WTC11 (cell line): ENCODE measurements at regions of chr10 and their contacts with region 1.

Region 1: DNA sequence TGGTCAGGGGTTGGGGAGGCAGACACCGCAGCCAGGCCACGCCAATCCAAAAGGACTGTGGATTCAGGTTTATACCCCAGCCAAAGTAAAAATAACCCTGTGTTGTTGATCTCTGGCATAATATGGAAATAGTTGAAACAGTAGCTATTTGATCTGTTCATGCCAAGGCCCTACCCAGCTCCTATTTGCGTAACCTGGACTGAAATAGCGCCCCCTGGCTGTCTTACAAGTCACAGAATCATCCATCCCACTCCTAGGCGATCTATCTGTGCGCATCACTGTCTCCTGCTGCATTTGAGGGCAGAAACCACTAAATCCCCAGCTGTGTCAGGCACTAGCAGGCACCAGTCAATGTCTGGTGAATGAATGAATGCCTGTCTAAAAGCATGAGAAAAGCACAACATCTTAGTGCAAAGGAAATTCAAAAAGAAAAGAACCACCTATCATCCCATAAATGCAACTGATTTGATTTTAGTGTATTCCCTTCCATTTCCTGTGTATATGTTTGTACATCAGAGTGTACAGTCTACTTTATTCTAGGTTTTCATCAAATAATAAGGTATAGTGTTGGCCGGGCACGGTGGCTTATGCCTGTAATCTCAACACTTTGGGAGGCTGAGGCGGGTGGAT is 160.0 kb downstream of the SLIT1 start:
- DNase-seq: peak; percentile 69
- ATAC-seq: peak; percentile 92
- H3K4me3 Mint-ChIP-seq: no peak overlapping the region
- H3K27ac Mint-ChIP-seq: no peak overlapping the region
- H3K4me1 Mint-ChIP-seq: peaks cover 8% of the 10 kb centered on the region
- H3K27me3 Mint-ChIP-seq: no peaks in the 10 kb centered on the region
- CTCF ChIP-seq: peak; percentile 88

Region 2: GRCh38 chr10:96532496-96532895 is 493.2 kb before region 1 on chr10:
- CTCF ChIA-PET with region 1: no interaction called
- POLR2A ChIA-PET with region 1: no interaction called
- DNase-seq: no peak
- ATAC-seq: no peak
- H3K4me3 Mint-ChIP-seq: no peak overlapping the region
- H3K27ac Mint-ChIP-seq: no peak overlapping the region
- H3K4me1 Mint-ChIP-seq: peaks cover 5% of the 10 kb centered on the region; the same call in 1 of the 2 replicates
- H3K27me3 Mint-ChIP-seq: no peaks in the 10 kb centered on the region
- CTCF ChIP-seq: no peak

Region 3: DNA sequence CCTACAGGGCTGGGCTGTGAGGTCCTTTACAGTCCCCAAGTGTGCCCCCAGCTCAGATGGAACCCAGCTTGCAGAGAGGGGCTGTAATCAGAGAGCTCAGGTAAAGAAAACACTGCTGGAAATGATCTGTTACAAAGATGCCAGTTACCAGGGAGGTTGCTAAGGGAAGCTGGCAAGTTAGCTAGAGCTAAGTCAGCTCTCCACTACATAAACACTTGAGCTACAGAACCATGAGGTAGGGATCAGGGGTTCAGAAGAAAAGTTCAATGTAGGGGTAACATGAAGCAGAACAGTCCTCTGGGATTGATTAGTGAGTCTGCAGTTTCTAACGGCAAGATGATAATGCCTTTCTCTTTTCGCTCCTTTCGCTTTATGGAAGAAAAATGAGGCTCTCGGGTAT is 385.8 kb before region 1 on chr10:
- CTCF ChIA-PET with region 1: interaction called, 18 read pairs
- POLR2A ChIA-PET with region 1: no interaction called
- DNase-seq: no peak
- ATAC-seq: no peak
- H3K4me3 Mint-ChIP-seq: no peak overlapping the region
- H3K27ac Mint-ChIP-seq: no peak overlapping the region
- H3K4me1 Mint-ChIP-seq: no peaks in the 10 kb centered on the region
- H3K27me3 Mint-ChIP-seq: no peaks in the 10 kb centered on the region
- CTCF ChIP-seq: no peak

Region 4: DNA sequence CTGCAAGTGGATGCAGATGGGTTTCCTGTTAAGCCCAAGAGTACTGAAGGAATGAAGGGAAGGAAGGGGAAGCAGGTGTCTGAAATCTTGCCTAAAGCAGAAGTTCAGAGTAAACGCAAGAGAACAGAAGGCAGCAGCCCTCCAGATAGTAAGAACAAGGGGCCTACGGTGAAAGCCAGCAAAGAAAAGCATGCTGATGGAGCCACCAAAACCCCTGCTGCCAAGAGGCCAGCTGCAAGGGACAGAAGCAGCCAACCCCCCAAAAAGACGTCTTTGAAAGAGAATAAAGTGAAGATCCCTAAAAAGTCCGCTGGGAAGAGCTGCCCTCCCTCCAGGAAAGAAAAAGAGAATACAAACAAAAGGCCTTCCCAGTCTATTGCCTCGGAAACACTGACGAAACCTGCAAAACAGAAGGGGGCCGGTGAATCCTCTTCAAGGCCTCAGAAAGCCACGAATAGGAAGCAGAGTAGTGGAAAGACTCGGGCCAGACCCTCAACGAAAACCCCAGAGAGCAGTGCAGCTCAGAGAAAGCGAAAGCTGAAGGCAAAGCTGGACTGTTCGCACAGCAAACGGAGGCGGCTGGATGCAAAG is 41.1 kb before region 1 on chr10:
- CTCF ChIA-PET with region 1: interaction called, 18 read pairs
- POLR2A ChIA-PET with region 1: no interaction called
- DNase-seq: no peak
- ATAC-seq: peak; percentile 85
- H3K4me3 Mint-ChIP-seq: no peak overlapping the region
- H3K27ac Mint-ChIP-seq: peak overlapping the region; percentile 91
- H3K4me1 Mint-ChIP-seq: peaks cover 24% of the 10 kb centered on the region
- H3K27me3 Mint-ChIP-seq: no peaks in the 10 kb centered on the region
- CTCF ChIP-seq: no peak

Region 5: GRCh38 chr10:96998329-96998888 is 27.3 kb before region 1 on chr10:
- CTCF ChIA-PET with region 1: interaction called, 27 read pairs
- POLR2A ChIA-PET with region 1: no interaction called
- DNase-seq: no peak
- ATAC-seq: no peak
- H3K4me3 Mint-ChIP-seq: no peak overlapping the region
- H3K27ac Mint-ChIP-seq: no peak overlapping the region
- H3K4me1 Mint-ChIP-seq: no peaks in the 10 kb centered on the region
- H3K27me3 Mint-ChIP-seq: no peaks in the 10 kb centered on the region
- CTCF ChIP-seq: no peak

Region 6: GRCh38 chr10:97037365-97038361 is 11.9 kb after region 1 on chr10:
- CTCF ChIA-PET with region 1: interaction called, 98 read pairs
- POLR2A ChIA-PET with region 1: no interaction called
- DNase-seq: peak; percentile 95
- ATAC-seq: peak; percentile 94
- H3K4me3 Mint-ChIP-seq: peak overlapping the region; percentile 45
- H3K27ac Mint-ChIP-seq: no peak overlapping the region
- H3K4me1 Mint-ChIP-seq: peaks cover 28% of the 10 kb centered on the region
- H3K27me3 Mint-ChIP-seq: peaks cover 5% of the 10 kb centered on the region
- CTCF ChIP-seq: peak; percentile 92

Region 7: DNA sequence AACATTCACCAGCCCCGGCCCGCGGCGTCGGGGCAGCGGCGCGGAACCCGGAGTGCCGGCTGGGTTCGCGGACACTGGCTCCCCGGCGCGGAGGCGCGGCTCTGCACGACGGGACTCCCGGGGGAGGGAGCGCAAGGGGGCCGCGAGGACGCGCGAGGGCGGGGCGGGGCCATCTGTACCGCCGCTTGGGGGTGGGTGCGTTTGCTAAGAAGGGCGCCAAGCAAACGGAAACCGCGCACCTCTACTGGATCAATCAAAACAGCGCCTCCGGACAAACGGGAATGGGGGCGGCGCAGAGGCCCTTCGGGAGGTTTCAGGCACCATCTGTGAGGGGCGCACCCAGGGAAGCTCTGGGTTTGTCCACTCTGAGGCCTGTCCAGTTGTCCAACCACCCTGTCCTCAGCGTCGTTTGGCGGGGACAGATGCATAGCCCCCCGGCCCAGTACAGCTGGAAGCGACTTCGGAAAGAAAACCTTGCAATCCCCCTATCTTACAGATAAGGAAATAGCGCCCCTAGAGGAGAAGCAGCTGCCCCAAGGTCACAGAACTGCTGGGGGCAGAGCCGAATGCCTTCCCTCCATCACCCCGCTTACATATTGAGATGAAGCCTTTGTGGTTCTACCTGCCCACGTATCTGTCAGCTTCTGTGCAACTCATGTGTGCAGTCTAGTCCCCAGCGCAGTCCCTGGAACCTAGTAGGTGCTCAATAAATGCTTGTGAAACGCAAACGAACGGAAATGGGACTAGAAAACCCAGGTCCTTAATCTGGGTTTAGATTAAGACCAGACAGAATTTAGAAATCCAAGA is 170.7 kb after region 1 on chr10:
- CTCF ChIA-PET with region 1: interaction called, 14 read pairs
- POLR2A ChIA-PET with region 1: no interaction called
- DNase-seq: peak; percentile 78
- ATAC-seq: peak; percentile 91
- H3K4me3 Mint-ChIP-seq: peak overlapping the region; percentile 77
- H3K27ac Mint-ChIP-seq: no peak overlapping the region
- H3K4me1 Mint-ChIP-seq: peaks cover 13% of the 10 kb centered on the region
- H3K27me3 Mint-ChIP-seq: peaks cover 15% of the 10 kb centered on the region
- CTCF ChIP-seq: peak; percentile 76

Region 8: DNA sequence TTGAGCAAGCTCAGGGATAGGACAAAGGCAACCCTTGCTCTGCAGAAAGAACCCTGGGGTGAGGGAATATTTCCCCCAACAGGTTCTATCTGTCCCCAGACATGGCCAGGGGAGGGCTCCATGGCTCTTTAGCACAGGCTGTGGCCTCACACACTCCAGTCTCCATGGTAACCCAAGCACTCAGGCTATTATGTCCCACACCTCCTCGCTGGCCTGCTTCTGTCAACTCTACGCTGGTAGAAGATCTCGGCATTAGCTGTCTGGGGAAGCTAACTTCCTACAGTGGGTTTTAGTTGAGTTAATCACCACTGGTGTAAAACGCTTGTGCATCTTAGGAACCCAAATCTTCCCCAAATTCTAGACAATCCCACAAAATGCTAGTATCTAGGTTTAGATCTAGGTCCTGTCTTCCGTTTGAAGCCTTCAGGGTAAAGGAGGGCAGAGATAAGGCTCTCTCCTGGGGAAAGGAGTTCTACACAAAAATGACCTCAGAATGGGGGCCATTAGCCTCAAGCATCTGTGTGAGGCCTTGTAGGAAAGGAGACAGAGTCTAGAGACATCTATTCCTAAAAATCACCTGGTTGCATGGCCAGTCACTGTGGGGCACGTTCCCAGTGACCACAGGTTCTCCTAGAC is 196.7 kb after region 1 on chr10:
- CTCF ChIA-PET with region 1: interaction called, 10 read pairs
- POLR2A ChIA-PET with region 1: no interaction called
- DNase-seq: peak; percentile 54
- ATAC-seq: peak; percentile 99
- H3K4me3 Mint-ChIP-seq: no peak overlapping the region
- H3K27ac Mint-ChIP-seq: no peak overlapping the region
- H3K4me1 Mint-ChIP-seq: peaks cover 9% of the 10 kb centered on the region
- H3K27me3 Mint-ChIP-seq: no peaks in the 10 kb centered on the region
- CTCF ChIP-seq: no peak